ENCODE measurements at regions of chr21 and their contacts with region 1.

Region 1: GRCh38 chr21:36989699-36990507 is 16.6 kb upstream of the RIPPLY3 start:
- DNase-seq: peak; percentile 73 to 90 (median 80)
- H3K4me3 ChIP-seq: peak overlapping the region; percentile 8 to 72
- H3K4me3 Mint-ChIP-seq: peak overlapping the region; percentile 80 to 95 (median 90)
- H3K27ac ChIP-seq: peak overlapping the region; percentile 60
- H3K27ac Mint-ChIP-seq: peak overlapping the region; percentile 62 to 96 (median 91)
- H3K4me1 ChIP-seq: peaks cover 19% of the 10 kb centered on the region
- H3K4me1 Mint-ChIP-seq: peaks cover 13 to 27% (median 19%) of the 10 kb centered on the region in 4 donors
- H3K27me3 ChIP-seq: no peaks in the 10 kb centered on the region
- H3K27me3 Mint-ChIP-seq: no peaks in the 10 kb centered on the region

Region 2: GRCh38 chr21:36060159-36060921 is 929.6 kb before region 1 on chr21 and contains the start of gene SETD4:
- CTCF ChIA-PET with region 1: no interaction called
- POLR2A ChIA-PET with region 1: no interaction called
- intact Hi-C with region 1: loop called (anchors 10 kb)
- DNase-seq: peak; percentile 91 to 95 (median 93)
- H3K4me3 ChIP-seq: peak within 1 kb of the TSS; percentile 94 to 98
- H3K4me3 Mint-ChIP-seq: peak within 1 kb of the TSS; percentile 93 to 99 (median 96)
- H3K27ac ChIP-seq: peak within 1 kb of the TSS; percentile 83
- H3K27ac Mint-ChIP-seq: peak within 1 kb of the TSS; percentile 98 to 99 (median 98)
- H3K4me1 ChIP-seq: peaks cover 13% of the 10 kb centered on the region
- H3K4me1 Mint-ChIP-seq: peaks cover 6 to 34% (median 14%) of the 10 kb centered on the region in 4 donors
- H3K27me3 ChIP-seq: no peaks in the 10 kb centered on the region
- H3K27me3 Mint-ChIP-seq: no peaks in the 10 kb centered on the region
- total RNA-seq, gene SETD4: 30.3 to 31.0 TPM

Region 3: GRCh38 chr21:36934864-36935420 is 55.0 kb before region 1 on chr21:
- CTCF ChIA-PET with region 1: interaction called, 5 read pairs
- POLR2A ChIA-PET with region 1: no interaction called
- intact Hi-C with region 1: loop called (anchors 1 kb)
- DNase-seq: no peak
- H3K4me3 ChIP-seq: no peak overlapping the region
- H3K4me3 Mint-ChIP-seq: no peak overlapping the region
- H3K27ac ChIP-seq: no peak overlapping the region
- H3K27ac Mint-ChIP-seq: no peak overlapping the region
- H3K4me1 ChIP-seq: no peaks in the 10 kb centered on the region
- H3K4me1 Mint-ChIP-seq: no peaks in the 10 kb centered on the region
- H3K27me3 ChIP-seq: no peaks in the 10 kb centered on the region
- H3K27me3 Mint-ChIP-seq: no peaks in the 10 kb centered on the region

Region 4: GRCh38 chr21:36966066-36966820 is 23.7 kb before region 1 on chr21 and contains the start of gene HLCS:
- CTCF ChIA-PET with region 1: interaction called, 65 read pairs
- POLR2A ChIA-PET with region 1: interaction called, 40 read pairs
- intact Hi-C with region 1: loop called (anchors 1 kb)
- DNase-seq: peak; percentile 72 to 80 (median 76)
- H3K4me3 ChIP-seq: peak within 1 kb of the TSS in 1 of 2 donors; percentile 54
- H3K4me3 Mint-ChIP-seq: peak within 1 kb of the TSS; percentile 76 to 92 (median 87)
- H3K27ac ChIP-seq: peak within 1 kb of the TSS; percentile 58
- H3K27ac Mint-ChIP-seq: peak within 1 kb of the TSS; percentile 81 to 96 (median 88)
- H3K4me1 ChIP-seq: peaks cover 14% of the 10 kb centered on the region
- H3K4me1 Mint-ChIP-seq: peaks cover 7 to 20% (median 15%) of the 10 kb centered on the region in 4 donors
- H3K27me3 ChIP-seq: no peaks in the 10 kb centered on the region
- H3K27me3 Mint-ChIP-seq: no peaks in the 10 kb centered on the region
- total RNA-seq, gene HLCS: 13.9 to 14.7 TPM

Region 5: DNA sequence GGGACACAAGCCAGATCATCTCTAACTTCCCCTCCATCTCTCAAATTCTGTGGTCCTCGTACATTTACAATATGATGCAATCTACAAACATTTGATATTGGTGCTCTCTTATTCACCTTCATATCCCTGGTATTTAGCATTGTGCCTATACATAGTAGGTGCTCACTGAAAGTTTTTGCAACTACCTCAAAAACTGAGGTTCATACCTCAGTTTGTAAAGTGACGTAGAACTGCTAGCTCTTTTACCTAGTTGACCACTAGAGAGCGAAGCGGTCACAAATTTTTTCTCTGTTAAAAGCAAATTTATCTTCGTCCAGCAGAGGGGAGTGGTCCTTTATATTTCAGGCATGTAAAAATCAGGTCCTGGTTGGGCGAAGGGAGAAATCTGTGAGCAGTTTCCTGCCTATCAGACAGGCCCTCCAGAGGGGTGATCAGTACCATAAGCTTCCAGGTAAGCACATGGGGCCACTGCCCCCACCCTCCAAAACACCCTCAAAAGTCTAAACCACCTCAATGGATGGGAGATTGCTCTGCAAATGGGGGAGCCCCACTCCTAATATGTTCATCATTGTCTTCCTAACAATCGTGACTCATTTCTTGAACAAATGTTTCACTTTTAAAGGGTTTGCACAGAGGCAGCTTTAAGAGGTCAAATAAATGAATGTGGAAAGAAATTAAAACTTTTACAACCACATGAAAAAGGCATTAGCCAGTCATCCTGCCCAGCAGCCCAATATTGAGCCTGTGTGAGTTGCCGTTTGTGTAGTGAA is 12.8 kb before region 1 on chr21:
- CTCF ChIA-PET with region 1: interaction called, 60 read pairs
- POLR2A ChIA-PET with region 1: interaction called, 10 read pairs
- intact Hi-C with region 1: loop called (anchors 1 kb)
- DNase-seq: peak in 4 of 5 donors; percentile 31 to 69 (median 54)
- H3K4me3 ChIP-seq: no peak overlapping the region
- H3K4me3 Mint-ChIP-seq: peak overlapping the region in 3 of 8 donors; percentile 12 to 46 (median 43)
- H3K27ac ChIP-seq: no peak overlapping the region
- H3K27ac Mint-ChIP-seq: peak overlapping the region in 6 of 7 donors; percentile 24 to 81 (median 74)
- H3K4me1 ChIP-seq: no peaks in the 10 kb centered on the region
- H3K4me1 Mint-ChIP-seq: peaks cover 5 to 22% (median 15%) of the 10 kb centered on the region in 4 donors
- H3K27me3 ChIP-seq: no peaks in the 10 kb centered on the region
- H3K27me3 Mint-ChIP-seq: peaks cover 2 to 8% of the 10 kb centered on the region in 2 donors

Region 6: DNA sequence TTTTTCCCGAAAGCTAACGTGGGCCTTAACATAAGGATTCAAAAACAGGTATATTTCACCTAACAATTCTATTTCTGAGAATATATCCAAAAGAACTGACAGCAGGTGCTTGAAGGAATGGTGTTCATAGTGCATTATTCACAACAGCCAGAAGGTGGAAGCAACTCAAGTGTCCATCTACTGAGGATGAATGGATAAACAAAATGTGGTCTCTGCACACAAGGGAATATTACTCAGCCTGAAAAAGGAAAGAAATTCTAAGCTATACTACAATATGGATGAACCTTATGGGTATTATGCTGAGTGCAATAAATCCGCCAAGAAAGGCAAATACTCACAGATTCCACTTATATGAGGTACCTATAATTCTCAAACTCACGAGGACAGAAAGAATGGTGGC is 10.5 kb after region 1 on chr21:
- CTCF ChIA-PET with region 1: interaction called, 13 read pairs
- POLR2A ChIA-PET with region 1: interaction called, 5 read pairs
- intact Hi-C with region 1: no loop called
- DNase-seq: no peak
- H3K4me3 ChIP-seq: no peak overlapping the region
- H3K4me3 Mint-ChIP-seq: no peak overlapping the region
- H3K27ac ChIP-seq: no peak overlapping the region
- H3K27ac Mint-ChIP-seq: no peak overlapping the region
- H3K4me1 ChIP-seq: peaks cover 8% of the 10 kb centered on the region
- H3K4me1 Mint-ChIP-seq: peaks cover 7 to 10% (median 8%) of the 10 kb centered on the region in 4 donors
- H3K27me3 ChIP-seq: no peaks in the 10 kb centered on the region
- H3K27me3 Mint-ChIP-seq: no peaks in the 10 kb centered on the region

Region 7: GRCh38 chr21:37072988-37073416 is 83.1 kb after region 1 on chr21 and contains the starts of genes PIGP and TTC3:
- CTCF ChIA-PET with region 1: interaction called, 4 read pairs
- POLR2A ChIA-PET with region 1: interaction called, 4 read pairs
- intact Hi-C with region 1: loop called (anchors 1 kb)
- DNase-seq: peak; percentile 93 to 97 (median 96)
- H3K4me3 ChIP-seq: peak within 1 kb of the TSS; percentile 83 to 91
- H3K4me3 Mint-ChIP-seq: peak within 1 kb of the TSS; percentile 95 to 100 (median 98)
- H3K27ac ChIP-seq: peak within 1 kb of the TSS; percentile 91
- H3K27ac Mint-ChIP-seq: peak within 1 kb of the TSS; percentile 92 to 100 (median 98)
- H3K4me1 ChIP-seq: peaks cover 36% of the 10 kb centered on the region
- H3K4me1 Mint-ChIP-seq: peaks cover 31 to 63% (median 44%) of the 10 kb centered on the region in 4 donors
- H3K27me3 ChIP-seq: no peaks in the 10 kb centered on the region
- H3K27me3 Mint-ChIP-seq: no peaks in the 10 kb centered on the region
- total RNA-seq, gene PIGP: 17.2 to 19.7 TPM
- total RNA-seq, gene TTC3: 163 to 171 TPM